PC-3 (cell line): ENCODE measurements at regions of chrX and their contacts with region 1.

Region 1: DNA sequence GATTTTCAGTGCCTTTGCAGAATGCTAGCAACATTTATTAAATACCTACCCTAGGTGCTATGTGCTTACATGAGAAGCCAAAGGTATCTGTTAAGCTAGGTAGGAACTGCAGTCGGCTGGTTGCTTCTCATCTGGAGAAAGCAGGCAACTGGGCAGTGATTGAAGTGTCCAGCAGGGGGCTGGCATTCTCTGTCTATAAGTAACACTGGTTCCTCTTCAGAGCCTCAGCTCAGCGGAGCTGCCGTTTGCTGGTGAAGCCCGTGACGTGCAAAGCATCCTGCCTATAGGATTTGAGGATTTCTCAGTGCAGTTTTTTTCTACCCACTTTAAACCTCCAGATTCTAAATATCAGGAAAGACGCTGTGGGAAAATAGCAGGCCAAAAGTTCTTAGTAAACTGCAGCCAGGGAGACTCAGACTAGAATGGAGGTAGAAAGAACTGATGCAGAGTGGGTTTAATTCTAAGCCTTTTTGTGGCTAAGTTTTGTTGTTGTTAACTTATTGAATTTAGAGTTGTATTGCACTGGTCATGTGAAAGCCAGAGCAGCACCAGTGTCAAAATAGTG is at the start of gene GRPR:
- DNase-seq: peak; percentile 95
- ATAC-seq: peak; percentile 85
- H3K4me3 ChIP-seq: peak within 1 kb of the TSS; percentile 81
- H3K27ac ChIP-seq: no peak within 1 kb of the TSS; the same call in 1 of the 2 replicates
- H3K4me1 ChIP-seq: peaks cover 15% of the 10 kb centered on the region
- H3K27me3 ChIP-seq: no peaks in the 10 kb centered on the region
- CTCF ChIP-seq: peak; percentile 87
- total RNA-seq, gene GRPR: 22.5 and 26.5 TPM in 2 replicates

Region 2: DNA sequence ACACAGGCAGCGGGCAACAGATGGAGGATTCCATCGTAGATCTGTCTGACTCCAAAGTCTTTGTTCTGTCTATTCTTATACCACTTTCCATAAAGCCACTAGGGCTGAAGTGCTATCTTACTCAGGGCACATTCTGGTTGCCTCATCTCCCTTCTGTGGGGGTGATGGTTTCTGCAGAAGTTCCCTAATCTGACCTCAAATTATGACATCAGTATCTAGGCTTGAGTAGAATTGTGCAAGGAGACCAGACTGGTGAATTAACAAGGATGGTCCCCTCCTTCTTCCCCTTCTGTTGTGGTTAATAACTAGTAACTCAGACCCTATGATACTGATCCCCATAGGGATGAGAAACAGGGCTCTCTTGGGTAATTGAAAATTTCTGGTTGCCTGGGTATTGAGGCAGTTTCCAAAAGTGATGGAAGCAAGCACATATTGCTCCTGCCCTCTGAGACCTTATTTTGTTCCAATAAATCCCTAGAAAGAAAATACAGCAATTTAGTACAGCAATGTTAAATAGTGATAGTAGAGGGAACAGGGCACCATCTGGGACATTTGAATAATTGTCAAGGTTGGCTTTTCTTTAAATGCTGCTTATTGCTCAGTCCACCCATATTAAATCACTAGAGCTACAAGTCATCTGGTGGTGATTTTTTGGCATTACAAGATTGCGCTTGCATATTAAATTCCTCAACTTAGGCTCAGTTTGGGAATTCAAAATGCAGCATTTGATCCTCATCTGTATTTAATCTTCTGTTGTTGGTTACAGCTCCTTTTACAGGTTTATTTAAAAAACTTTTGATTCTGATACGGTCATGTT is 211.4 kb before region 1 on chrX:
- CTCF ChIA-PET with region 1: no interaction called
- POLR2A ChIA-PET with region 1: no interaction called
- intact Hi-C with region 1: no loop called
- DNase-seq: peak; percentile 8
- ATAC-seq: no peak
- H3K4me3 ChIP-seq: no peak overlapping the region
- H3K27ac ChIP-seq: no peak overlapping the region
- H3K4me1 ChIP-seq: no peaks in the 10 kb centered on the region
- H3K27me3 ChIP-seq: no peaks in the 10 kb centered on the region
- CTCF ChIP-seq: peak; percentile 26; the same call in 1 of the 2 replicates

Region 3: GRCh38 chrX:15930585-15930984 is 192.7 kb before region 1 on chrX:
- CTCF ChIA-PET with region 1: interaction called, 4 read pairs
- POLR2A ChIA-PET with region 1: no interaction called
- intact Hi-C with region 1: loop called (anchors 1 kb)
- DNase-seq: peak; percentile 66
- ATAC-seq: peak; percentile 88
- H3K4me3 ChIP-seq: no peak overlapping the region
- H3K27ac ChIP-seq: no peak overlapping the region
- H3K4me1 ChIP-seq: no peaks in the 10 kb centered on the region; the same call in 1 of the 2 replicates
- H3K27me3 ChIP-seq: no peaks in the 10 kb centered on the region
- CTCF ChIP-seq: peak; percentile 66

Region 4: DNA sequence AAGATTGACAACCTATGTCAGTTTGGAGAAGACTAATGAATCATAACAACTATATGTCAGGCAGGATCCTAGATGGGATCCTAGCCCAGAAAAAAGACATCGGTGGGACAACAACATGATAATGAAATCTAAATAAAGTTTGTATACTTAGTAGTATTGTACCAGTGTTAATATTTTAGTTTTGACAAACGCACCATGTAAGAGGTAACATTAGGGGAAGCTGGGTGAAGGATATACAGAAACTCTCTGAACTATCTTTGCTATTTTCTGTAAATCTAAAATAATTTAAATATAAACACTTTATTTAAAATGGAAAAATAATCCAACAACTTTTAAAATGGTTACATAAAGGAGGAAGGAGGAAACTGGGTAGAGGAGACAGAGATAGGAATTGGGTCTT is 163.1 kb before region 1 on chrX:
- CTCF ChIA-PET with region 1: no interaction called
- POLR2A ChIA-PET with region 1: no interaction called
- intact Hi-C with region 1: no loop called
- DNase-seq: no peak
- ATAC-seq: no peak
- H3K4me3 ChIP-seq: no peak overlapping the region
- H3K27ac ChIP-seq: no peak overlapping the region
- H3K4me1 ChIP-seq: peaks cover 15% of the 10 kb centered on the region
- H3K27me3 ChIP-seq: no peaks in the 10 kb centered on the region
- CTCF ChIP-seq: no peak

Region 5: GRCh38 chrX:16160729-16161128 is 37.4 kb after region 1 on chrX:
- CTCF ChIA-PET with region 1: no interaction called
- POLR2A ChIA-PET with region 1: no interaction called
- intact Hi-C with region 1: loop called (anchors 1 kb)
- DNase-seq: peak; percentile 93
- ATAC-seq: peak; percentile 84
- H3K4me3 ChIP-seq: no peak overlapping the region
- H3K27ac ChIP-seq: peak overlapping the region; percentile 65
- H3K4me1 ChIP-seq: peaks cover 35% of the 10 kb centered on the region
- H3K27me3 ChIP-seq: no peaks in the 10 kb centered on the region
- CTCF ChIP-seq: no peak

Region 6: DNA sequence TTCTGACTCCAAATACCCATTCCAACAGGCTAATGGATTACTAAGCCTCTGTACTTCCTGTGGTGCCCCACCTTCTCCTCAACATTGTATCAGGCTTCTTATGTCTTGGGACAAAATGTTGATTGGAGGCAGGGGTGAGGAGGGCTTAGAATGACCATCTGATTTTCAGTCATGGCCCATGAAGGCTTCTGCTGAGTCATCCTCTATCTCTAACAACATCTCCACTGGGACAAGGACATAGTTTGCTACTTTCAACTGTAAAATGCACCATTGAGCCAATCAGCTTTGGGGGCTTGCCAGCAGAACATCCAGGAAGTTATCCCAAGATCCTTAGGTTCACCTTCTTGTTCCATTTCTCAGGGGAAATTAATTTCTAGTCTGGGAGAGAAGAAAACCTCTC is 73.5 kb after region 1 on chrX:
- CTCF ChIA-PET with region 1: no interaction called
- POLR2A ChIA-PET with region 1: no interaction called
- intact Hi-C with region 1: no loop called
- DNase-seq: no peak
- ATAC-seq: no peak
- H3K4me3 ChIP-seq: no peak overlapping the region
- H3K27ac ChIP-seq: no peak overlapping the region
- H3K4me1 ChIP-seq: no peaks in the 10 kb centered on the region
- H3K27me3 ChIP-seq: no peaks in the 10 kb centered on the region
- CTCF ChIP-seq: no peak

Region 7: DNA sequence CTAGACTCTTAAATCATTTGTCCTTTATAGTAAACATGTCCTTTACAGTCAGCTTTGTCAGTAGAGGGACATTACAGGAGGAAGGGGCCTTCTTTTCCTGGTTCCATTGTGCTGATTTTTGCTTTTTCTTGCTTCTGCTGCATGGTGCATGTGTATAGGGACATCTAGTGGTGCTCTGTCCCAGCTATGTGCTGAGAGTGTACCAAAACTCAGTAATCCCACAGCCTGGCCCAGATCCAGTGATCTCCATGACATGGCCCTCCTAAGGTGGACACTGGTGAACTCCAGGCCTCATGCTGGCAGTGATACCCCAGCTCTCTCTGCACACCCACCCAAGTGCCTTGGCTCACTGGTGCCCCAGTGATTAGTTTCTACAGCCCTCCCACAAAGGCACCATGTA is 89.1 kb after region 1 on chrX:
- CTCF ChIA-PET with region 1: interaction called, 6 read pairs
- POLR2A ChIA-PET with region 1: no interaction called
- intact Hi-C with region 1: loop called (anchors 1 kb)
- DNase-seq: peak; percentile 42
- ATAC-seq: peak; percentile 60
- H3K4me3 ChIP-seq: no peak overlapping the region
- H3K27ac ChIP-seq: no peak overlapping the region
- H3K4me1 ChIP-seq: peaks cover 10% of the 10 kb centered on the region; the same call in 1 of the 2 replicates
- H3K27me3 ChIP-seq: no peaks in the 10 kb centered on the region
- CTCF ChIP-seq: peak; percentile 58

Region 8: GRCh38 chrX:16416587-16416986 is 293.3 kb after region 1 on chrX:
- CTCF ChIA-PET with region 1: no interaction called
- POLR2A ChIA-PET with region 1: no interaction called
- intact Hi-C with region 1: no loop called
- DNase-seq: no peak
- ATAC-seq: no peak
- H3K4me3 ChIP-seq: no peak overlapping the region
- H3K27ac ChIP-seq: no peak overlapping the region
- H3K4me1 ChIP-seq: no peaks in the 10 kb centered on the region
- H3K27me3 ChIP-seq: no peaks in the 10 kb centered on the region
- CTCF ChIP-seq: no peak

Region 9: GRCh38 chrX:16445166-16445752 is 322.0 kb after region 1 on chrX:
- CTCF ChIA-PET with region 1: no interaction called
- POLR2A ChIA-PET with region 1: no interaction called
- intact Hi-C with region 1: loop called (anchors 5 kb)
- DNase-seq: peak; percentile 62
- ATAC-seq: peak; percentile 59; the same call in 1 of the 2 replicates
- H3K4me3 ChIP-seq: no peak overlapping the region
- H3K27ac ChIP-seq: peak overlapping the region; percentile 93
- H3K4me1 ChIP-seq: peaks cover 13% of the 10 kb centered on the region
- H3K27me3 ChIP-seq: no peaks in the 10 kb centered on the region
- CTCF ChIP-seq: peak; percentile 72